ENCODE measurements at regions of chr14 and their contacts with region 1.

Region 1: DNA sequence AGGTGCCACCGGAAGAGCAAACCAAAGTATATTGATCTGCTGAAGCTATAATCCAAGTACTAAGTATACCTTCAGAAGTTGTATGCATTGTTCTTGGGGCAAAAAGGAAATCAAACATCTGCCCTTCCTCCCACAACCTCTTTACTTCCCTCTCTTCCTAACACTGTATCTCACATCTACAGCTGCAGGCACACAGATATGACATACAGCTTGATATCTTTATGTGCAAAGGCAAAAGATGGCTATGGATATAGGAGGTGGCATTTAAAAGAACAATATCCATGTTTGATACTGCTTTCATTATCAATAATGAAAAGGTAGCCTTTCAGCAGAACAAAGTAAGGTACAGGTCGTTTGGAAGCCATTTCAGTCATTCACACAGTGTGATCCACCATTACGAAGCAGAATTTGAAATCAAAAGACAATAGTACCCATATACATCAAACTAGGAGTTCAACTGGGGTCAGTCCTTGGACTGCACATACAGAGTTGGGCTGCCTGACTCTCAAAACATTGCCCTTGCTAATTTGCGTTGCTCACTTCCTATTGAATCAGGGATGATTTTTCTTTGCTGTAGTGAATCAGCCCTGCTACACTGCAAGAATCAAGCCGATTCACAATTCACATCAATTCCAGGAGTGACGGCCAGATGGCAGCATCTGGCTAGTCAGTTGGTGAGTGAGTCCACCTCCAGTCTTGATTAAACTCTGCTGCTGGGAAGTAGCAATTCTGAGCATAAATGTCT is 8.9 kb downstream of the ANG start:
- DNase-seq: peak; percentile 34 to 83 (median 56)
- ATAC-seq: peak; percentile 94
- H3K4me3 ChIP-seq: no peak overlapping the region
- H3K27ac ChIP-seq: no peak overlapping the region
- H3K4me1 ChIP-seq: peaks cover 0 to 9% of the 10 kb centered on the region in 2 experiments; a peak in 2 of 5 replicates
- H3K27me3 ChIP-seq: peaks cover 3 to 6% of the 10 kb centered on the region in 2 experiments; a peak in 3 of 5 replicates
- CTCF ChIP-seq: peak; percentile 77 to 89 (median 80)
- EP300 ChIP-seq: peak; percentile 51; the same call in 1 of the 2 replicates
- POLR2A ChIP-seq: no peak
- RAD21 ChIP-seq: peak; percentile 93 to 94

Region 2: GRCh38 chr14:20757965-20758364 is 60.5 kb after region 1 on chr14:
- CTCF ChIA-PET with region 1: no interaction called
- POLR2A ChIA-PET with region 1: no interaction called
- in situ Hi-C with region 1: no loop called
- intact Hi-C with region 1: loop called (anchors 1 kb)
- DNase-seq: peak; percentile 40 to 59 (median 42)
- ATAC-seq: peak; percentile 83
- H3K4me3 ChIP-seq: no peak overlapping the region
- H3K27ac ChIP-seq: no peak overlapping the region
- H3K4me1 ChIP-seq: no peaks in the 10 kb centered on the region; a peak in 2 of 5 replicates
- H3K27me3 ChIP-seq: no peaks in the 10 kb centered on the region
- CTCF ChIP-seq: peak; percentile 60 to 67 (median 64)
- EP300 ChIP-seq: no peak
- POLR2A ChIP-seq: no peak
- RAD21 ChIP-seq: peak; percentile 45 to 75

Region 3: DNA sequence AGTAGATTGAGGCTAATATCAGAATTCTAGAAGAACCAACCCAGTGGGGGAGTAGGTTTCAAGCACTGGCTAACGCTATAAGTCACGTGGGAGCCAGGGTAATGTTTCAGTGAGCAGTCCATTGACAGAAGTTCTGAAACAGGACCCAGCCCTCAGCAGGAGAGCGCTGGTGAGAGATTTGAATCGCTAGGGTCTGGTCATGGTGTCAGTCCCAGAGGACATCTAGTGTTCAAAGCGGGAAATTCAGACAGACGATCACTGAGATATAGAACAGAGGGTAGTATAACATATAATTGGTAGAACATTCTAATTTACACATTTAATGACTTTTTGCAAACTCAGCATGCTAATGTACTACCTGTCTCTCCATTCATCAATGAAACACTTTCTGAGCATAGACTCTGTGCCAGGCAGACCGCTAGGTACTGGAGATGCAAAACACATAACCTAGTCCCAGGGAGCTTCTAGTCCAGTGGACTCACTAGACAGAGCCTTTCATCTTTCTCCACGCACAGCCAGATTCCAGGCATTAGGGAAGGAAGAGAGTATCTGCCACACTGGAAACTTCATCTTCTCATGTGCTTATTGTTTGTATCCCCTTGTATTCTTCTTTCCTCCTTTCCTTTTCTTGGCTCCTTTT is 158.3 kb after region 1 on chr14:
- CTCF ChIA-PET with region 1: interaction called, 42 read pairs
- POLR2A ChIA-PET with region 1: interaction called, 3 read pairs
- in situ Hi-C with region 1: loop called (anchors 5 kb)
- intact Hi-C with region 1: loop called (anchors 1 kb)
- DNase-seq: peak; percentile 42 to 83 (median 62)
- ATAC-seq: peak; percentile 97
- H3K4me3 ChIP-seq: no peak overlapping the region
- H3K27ac ChIP-seq: no peak overlapping the region
- H3K4me1 ChIP-seq: peaks cover 0 to 4% of the 10 kb centered on the region in 2 experiments; a peak in 2 of 5 replicates
- H3K27me3 ChIP-seq: no peaks in the 10 kb centered on the region
- CTCF ChIP-seq: peak; percentile 75 to 92 (median 80)
- EP300 ChIP-seq: no peak
- POLR2A ChIP-seq: no peak
- RAD21 ChIP-seq: peak; percentile 94 to 96

Region 4: DNA sequence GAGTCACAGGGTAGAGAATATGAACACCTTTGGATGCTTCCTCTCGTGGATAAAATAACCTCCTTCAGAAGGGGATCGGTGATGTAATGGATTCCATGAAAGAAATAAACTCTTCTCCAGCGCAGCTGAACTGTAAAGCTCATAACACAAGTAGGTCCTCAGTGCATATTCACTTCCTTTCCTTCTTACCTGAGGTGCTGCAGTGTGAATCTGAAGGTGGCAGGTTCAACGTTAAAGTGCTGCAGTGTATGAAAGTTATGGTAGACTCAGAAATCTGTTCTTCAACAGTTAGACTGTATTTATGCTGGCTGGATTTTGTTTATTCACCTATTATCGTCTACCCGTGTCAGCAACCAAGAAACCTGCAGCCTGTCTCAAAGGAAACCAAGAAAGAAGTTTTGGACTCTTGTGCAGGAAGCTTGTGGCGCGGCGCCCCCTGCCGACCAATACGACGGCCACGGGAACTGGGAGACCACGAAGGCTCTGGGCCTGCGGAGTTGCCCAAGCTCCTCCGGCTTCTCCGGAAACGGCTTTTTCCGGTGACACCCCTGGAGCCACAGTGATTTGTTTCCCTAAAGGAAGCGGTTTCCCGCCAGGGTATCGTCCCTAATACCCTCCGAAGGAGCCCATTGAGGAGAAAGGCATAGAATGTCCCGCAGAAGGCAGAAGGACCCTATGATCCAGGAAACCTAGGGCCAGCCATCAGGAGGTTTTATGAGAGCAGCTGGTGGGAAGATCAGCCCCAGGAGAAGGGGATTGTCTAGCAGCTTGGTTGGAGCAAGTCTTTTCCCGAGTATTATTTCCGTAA is 176.1 kb after region 1 on chr14:
- CTCF ChIA-PET with region 1: interaction called, 5 read pairs
- POLR2A ChIA-PET with region 1: no interaction called
- in situ Hi-C with region 1: no loop called
- intact Hi-C with region 1: loop called (anchors 5 kb)
- DNase-seq: peak; percentile 44 to 81 (median 50)
- ATAC-seq: peak; percentile 99
- H3K4me3 ChIP-seq: no peak overlapping the region
- H3K27ac ChIP-seq: no peak overlapping the region
- H3K4me1 ChIP-seq: no peaks in the 10 kb centered on the region; a peak in 1 of 5 replicates
- H3K27me3 ChIP-seq: no peaks in the 10 kb centered on the region; a peak in 1 of 5 replicates
- CTCF ChIP-seq: peak; percentile 79 to 85 (median 84)
- EP300 ChIP-seq: no peak
- POLR2A ChIP-seq: no peak
- RAD21 ChIP-seq: peak; percentile 63 to 72

Region 5: GRCh38 chr14:21039585-21040369 is 342.3 kb after region 1 on chr14:
- CTCF ChIA-PET with region 1: no interaction called
- POLR2A ChIA-PET with region 1: no interaction called
- in situ Hi-C with region 1: no loop called
- intact Hi-C with region 1: loop called (anchors 5 kb)
- DNase-seq: peak in 2 of 4 experiments; percentile 64 to 73
- ATAC-seq: peak; percentile 92
- H3K4me3 ChIP-seq: no peak overlapping the region
- H3K27ac ChIP-seq: no peak overlapping the region
- H3K4me1 ChIP-seq: peaks cover 5 to 25% of the 10 kb centered on the region in 2 experiments; a peak in 4 of 5 replicates
- H3K27me3 ChIP-seq: no peaks in the 10 kb centered on the region
- CTCF ChIP-seq: peak; percentile 62 to 84 (median 75)
- EP300 ChIP-seq: no peak
- POLR2A ChIP-seq: no peak
- RAD21 ChIP-seq: peak; percentile 81 to 89